ENCODE measurements at regions of chr20 and their contacts with region 1.

Region 1: DNA sequence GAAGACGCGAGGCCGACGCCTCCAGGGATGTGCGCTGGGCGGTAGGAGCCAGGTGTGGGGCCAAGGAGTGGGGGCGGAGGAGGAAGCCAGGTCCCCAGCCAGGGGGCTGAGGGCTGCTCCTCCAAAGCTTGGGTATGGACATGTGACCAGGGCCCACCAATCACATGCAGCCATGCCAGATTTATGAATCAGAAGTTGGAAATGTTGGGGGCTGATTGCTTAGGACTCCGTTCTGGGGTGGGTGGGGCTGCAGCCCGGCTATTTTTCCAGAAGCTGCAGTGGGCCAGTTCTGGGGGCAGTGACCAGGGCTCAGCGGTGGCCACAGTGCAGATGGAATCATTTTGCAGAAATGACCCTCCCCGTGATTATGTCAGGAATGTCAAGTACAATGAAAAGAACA is 96.0 kb downstream of the CEBPB start:
- DNase-seq: no peak

Region 2: DNA sequence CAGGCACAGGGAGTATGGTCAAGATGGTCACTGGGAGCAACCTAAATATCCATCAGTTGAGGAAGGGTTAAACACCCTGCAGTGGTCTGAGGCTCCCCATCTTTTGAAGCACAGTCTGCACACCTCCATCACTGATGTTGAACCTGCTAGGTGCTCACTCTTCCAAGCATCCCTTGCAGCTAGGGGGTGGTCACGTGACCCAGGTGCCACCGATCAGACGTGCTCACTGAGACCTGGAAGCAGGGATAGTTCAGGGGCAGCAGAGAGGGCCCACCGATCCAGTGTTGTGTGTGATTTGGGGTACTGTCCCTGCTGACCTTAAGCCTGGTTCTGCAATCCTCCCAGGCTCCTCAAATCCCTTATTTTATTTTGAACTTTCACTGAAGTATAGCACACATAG is 38.6 kb after region 1 on chr20:
- in situ Hi-C with region 1: loop called (anchors 5 kb)
- DNase-seq: no peak

Region 3: GRCh38 chr20:50415516-50416113 is 129.0 kb after region 1 on chr20:
- in situ Hi-C with region 1: no loop called
- DNase-seq: no peak

Region 4: GRCh38 chr20:50460460-50461267 is 174.1 kb after region 1 on chr20:
- in situ Hi-C with region 1: loop called (anchors 10 kb)
- DNase-seq: peak; percentile 95